Activated CD4-positive, alpha-beta memory T cell treated with anti-CD3 and anti-CD28 coated beads for 36 hours (primary cell): ENCODE measurements at regions of chr1 and their contacts with region 1.

Region 1: DNA sequence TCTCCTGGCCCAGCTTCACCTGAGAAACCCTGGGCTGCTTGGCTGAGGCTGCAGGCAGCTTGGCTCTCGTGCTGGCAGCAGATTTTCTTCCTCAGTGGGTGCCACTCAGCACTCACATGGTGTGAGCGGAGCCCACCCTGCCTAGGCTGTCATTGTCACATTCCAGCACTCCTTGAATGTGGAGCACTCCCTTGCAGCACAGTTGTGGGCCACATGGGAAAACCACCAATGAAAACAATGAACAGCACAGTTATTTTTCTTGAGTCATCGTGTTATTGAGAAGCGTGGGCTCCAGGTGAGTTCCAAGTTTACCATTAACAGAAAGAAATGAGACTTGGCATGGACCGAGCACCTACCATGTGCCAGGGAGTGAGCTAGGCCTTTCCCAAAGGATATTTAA is 27.2 kb upstream of the TRIM67 start:
- DNase-seq: no peak
- H3K4me3 Mint-ChIP-seq: no peak overlapping the region
- H3K27ac Mint-ChIP-seq: no peak overlapping the region
- H3K4me1 Mint-ChIP-seq: no peaks in the 10 kb centered on the region
- H3K27me3 Mint-ChIP-seq: no peaks in the 10 kb centered on the region

Region 2: GRCh38 chr1:230797942-230798418 is 336.6 kb before region 1 on chr1:
- CTCF ChIA-PET with region 1: no interaction called
- POLR2A ChIA-PET with region 1: no interaction called
- intact Hi-C with region 1: loop called (anchors 5 kb)
- DNase-seq: peak; percentile 14
- H3K4me3 Mint-ChIP-seq: no peak overlapping the region
- H3K27ac Mint-ChIP-seq: no peak overlapping the region
- H3K4me1 Mint-ChIP-seq: no peaks in the 10 kb centered on the region
- H3K27me3 Mint-ChIP-seq: peaks cover 18% of the 10 kb centered on the region